Calu3 (cell line): ENCODE measurements at regions of chr3 and their contacts with region 1.

Region 1: DNA sequence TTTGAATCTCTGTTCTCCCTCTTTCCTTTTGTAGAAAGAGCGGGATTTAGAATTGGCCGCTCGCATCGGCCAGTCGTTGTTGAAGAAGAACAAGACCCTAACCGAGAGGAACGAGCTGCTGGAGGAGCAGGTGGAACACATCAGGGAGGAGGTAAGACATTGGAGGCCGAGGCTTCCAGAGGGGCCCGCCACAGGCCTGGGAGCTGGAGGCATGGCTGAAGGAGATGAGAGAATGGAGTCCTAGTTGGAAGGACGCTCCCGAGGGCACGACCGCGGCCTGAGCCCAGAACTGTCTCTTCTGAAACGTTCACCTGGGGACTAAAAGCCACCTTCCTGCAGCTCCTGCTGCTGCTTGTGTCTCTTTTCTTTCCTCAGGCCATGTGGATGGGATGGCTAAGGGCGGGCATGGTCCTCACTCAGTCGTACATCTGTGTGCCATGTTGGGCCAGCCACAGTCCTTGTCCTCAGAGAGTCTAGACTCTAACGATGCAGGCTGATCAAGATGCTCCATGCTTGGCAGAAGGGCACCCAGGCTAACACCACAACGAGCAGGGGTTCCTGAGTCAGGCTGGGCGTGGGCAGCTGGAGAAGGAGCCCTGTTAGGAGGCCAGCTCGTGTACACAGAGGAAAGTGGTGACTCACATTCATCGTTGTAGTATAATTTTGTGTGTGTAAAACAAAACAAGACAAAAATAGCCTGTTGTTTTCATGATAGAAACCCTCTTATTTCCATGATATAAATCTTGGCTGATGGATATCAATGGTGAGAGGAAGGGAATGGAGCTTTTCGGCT is 81.1 kb downstream of the CCK start:
- DNase-seq: no peak
- H3K4me3 Mint-ChIP-seq: peak overlapping the region; percentile 89
- H3K27ac Mint-ChIP-seq: peak overlapping the region; percentile 100
- H3K4me1 Mint-ChIP-seq: peaks cover 59% of the 10 kb centered on the region
- H3K27me3 Mint-ChIP-seq: no peaks in the 10 kb centered on the region
- CTCF ChIP-seq: no peak

Region 2: GRCh38 chr3:41893977-41894376 is 290.9 kb before region 1 on chr3:
- CTCF ChIA-PET with region 1: no interaction called
- intact Hi-C with region 1: loop called (anchors 5 kb)
- DNase-seq: peak; percentile 45
- H3K4me3 Mint-ChIP-seq: no peak overlapping the region
- H3K27ac Mint-ChIP-seq: no peak overlapping the region
- H3K4me1 Mint-ChIP-seq: no peaks in the 10 kb centered on the region
- H3K27me3 Mint-ChIP-seq: no peaks in the 10 kb centered on the region
- CTCF ChIP-seq: no peak

Region 3: DNA sequence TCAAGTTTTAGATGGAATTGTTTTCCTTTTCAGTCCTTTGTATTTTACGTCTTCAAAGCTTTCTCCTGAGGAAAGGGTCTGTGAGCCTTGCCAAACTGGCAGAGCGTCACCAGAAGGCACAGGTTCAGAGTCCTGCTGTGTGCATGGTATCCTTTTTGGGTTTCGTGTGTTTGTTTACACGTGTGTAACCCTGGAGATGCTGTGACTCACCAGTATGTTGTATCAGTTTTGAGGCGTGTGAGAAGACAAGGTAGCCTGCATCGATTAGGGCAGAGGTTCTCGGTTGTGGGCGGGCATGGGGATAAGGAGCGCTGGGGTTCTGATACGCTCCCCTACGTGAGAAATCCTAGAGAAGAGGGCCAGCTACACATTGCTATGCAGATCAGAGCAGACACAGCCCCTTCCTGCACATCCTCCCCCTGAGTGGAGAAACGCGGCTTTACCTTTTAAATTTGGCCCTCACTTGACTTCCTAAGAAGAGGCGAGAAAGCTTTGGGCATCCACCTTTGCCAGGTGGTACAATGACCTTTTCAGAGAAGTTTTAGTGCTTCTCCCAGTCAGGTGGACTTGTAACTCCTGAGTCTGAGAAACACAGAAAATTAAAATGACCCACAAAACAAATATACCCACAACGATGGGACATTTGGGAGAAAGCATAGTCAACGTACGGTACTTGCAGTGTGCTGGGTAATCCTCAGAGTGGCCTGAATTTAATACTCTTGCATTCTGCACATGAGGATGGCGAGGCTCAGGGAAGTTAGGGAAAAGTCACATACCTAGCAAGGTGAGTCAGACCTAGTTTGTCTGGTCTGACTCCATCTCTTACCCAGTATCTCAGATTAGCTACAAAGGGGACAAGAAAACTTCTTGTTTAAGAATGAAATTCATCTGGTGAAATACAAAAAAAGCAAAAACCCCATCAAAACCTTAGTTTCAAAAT is 55.6 kb before region 1 on chr3:
- CTCF ChIA-PET with region 1: interaction called, 25 read pairs
- intact Hi-C with region 1: loop called (anchors 2 kb)
- DNase-seq: peak; percentile 84
- H3K4me3 Mint-ChIP-seq: peak overlapping the region; percentile 72
- H3K27ac Mint-ChIP-seq: peak overlapping the region; percentile 100
- H3K4me1 Mint-ChIP-seq: peaks cover 48% of the 10 kb centered on the region
- H3K27me3 Mint-ChIP-seq: no peaks in the 10 kb centered on the region
- CTCF ChIP-seq: no peak

Region 4: DNA sequence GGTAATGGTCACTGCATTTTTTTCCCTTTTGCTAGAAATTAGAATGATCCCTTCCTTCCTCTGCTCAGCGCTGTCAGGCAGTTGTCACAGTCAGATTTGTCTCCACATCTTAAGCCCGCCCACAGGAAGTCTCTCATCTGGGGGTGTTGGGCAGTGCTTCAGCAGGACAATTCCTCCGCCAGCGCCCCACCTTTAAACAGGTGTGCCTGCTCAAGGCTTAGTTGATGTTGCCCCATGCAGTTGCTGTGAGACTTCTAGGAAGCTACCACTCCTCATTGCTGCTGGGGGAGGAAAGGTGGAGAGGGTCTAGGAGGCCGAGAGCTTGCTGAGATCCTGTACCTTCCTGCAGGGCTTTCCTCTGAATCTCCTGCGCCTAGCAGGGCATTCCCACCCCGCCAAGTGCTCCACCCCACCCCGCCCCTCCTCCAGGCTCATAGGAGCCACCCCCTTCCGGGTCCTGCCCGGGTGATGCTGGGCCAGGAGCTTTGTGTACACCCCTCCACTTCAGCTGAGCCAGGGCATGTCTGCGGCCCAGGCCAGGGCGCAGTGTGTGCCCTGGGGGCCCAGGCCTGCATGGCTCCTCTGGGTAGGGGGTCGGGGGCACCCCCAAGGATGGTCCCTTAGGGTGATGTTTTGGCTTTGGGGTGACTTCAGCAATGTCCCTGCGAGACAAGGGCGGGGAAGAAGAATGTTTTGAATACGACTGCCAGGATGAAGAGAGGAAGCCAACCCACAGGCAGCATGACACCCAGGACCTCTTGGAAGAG is 25.0 kb before region 1 on chr3:
- CTCF ChIA-PET with region 1: interaction called, 12 read pairs
- intact Hi-C with region 1: loop called (anchors 1 kb)
- DNase-seq: peak; percentile 88
- H3K4me3 Mint-ChIP-seq: peak overlapping the region; percentile 97
- H3K27ac Mint-ChIP-seq: peak overlapping the region; percentile 43
- H3K4me1 Mint-ChIP-seq: peaks cover 32% of the 10 kb centered on the region
- H3K27me3 Mint-ChIP-seq: no peaks in the 10 kb centered on the region
- CTCF ChIP-seq: no peak